ENCODE measurements at regions of chr18 and their contacts with region 1.

Region 1: GRCh38 chr18:11512096-11513030 is 97.0 kb upstream of the SLC35G4 start:
- DNase-seq: no peak
- ATAC-seq: no peak
- H3K4me3 ChIP-seq: no peak overlapping the region
- H3K4me3 Mint-ChIP-seq: no peak overlapping the region
- H3K27ac ChIP-seq: no peak overlapping the region
- H3K27ac Mint-ChIP-seq: no peak overlapping the region
- H3K4me1 ChIP-seq: no peaks in the 10 kb centered on the region
- H3K4me1 Mint-ChIP-seq: peaks cover 0 to 7% (median 4%) of the 10 kb centered on the region in 3 donors
- H3K27me3 ChIP-seq: no peaks in the 10 kb centered on the region
- H3K27me3 Mint-ChIP-seq: no peaks in the 10 kb centered on the region

Region 2: GRCh38 chr18:11541202-11541601 is 28.8 kb after region 1 on chr18:
- CTCF ChIA-PET with region 1: no interaction called
- POLR2A ChIA-PET with region 1: no interaction called
- DNase-seq: no peak
- ATAC-seq: no peak
- H3K4me3 ChIP-seq: no peak overlapping the region
- H3K4me3 Mint-ChIP-seq: no peak overlapping the region
- H3K27ac ChIP-seq: no peak overlapping the region
- H3K27ac Mint-ChIP-seq: no peak overlapping the region
- H3K4me1 ChIP-seq: no peaks in the 10 kb centered on the region
- H3K4me1 Mint-ChIP-seq: no peaks in the 10 kb centered on the region
- H3K27me3 ChIP-seq: peaks cover 0 to 3% of the 10 kb centered on the region in 2 experiments
- H3K27me3 Mint-ChIP-seq: peaks cover 3 to 5% of the 10 kb centered on the region in 2 donors

Region 3: DNA sequence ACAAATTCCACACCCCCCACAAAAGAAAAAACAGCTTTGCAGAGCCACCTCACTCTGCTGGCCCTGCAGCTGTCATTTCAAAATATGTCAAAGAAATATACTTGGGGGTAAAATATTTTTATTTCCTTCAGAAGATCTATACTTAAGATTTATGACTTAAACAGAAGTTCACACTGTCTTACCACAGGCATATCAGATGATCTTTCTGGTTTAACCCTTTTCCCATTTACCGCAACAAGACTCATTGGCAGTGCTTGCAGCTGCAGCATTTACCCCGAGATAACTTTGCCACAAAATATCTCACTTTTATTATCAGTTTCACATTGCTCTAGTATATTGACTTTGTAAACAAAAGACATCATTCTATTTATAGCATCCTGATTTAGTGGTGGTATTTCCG is 75.5 kb after region 1 on chr18:
- CTCF ChIA-PET with region 1: no interaction called
- POLR2A ChIA-PET with region 1: interaction called in 1 of 2 experiments, 11 read pairs
- DNase-seq: peak in 1 of 35 experiments; percentile 21
- ATAC-seq: peak in 3 of 4 experiments; percentile 27 to 56 (median 32)
- H3K4me3 ChIP-seq: no peak overlapping the region
- H3K4me3 Mint-ChIP-seq: no peak overlapping the region
- H3K27ac ChIP-seq: no peak overlapping the region
- H3K27ac Mint-ChIP-seq: peak overlapping the region in 1 of 2 donors; percentile 45
- H3K4me1 ChIP-seq: peaks cover 11 to 18% of the 10 kb centered on the region in 2 experiments
- H3K4me1 Mint-ChIP-seq: peaks cover 23 to 25% (median 25%) of the 10 kb centered on the region in 3 donors
- H3K27me3 ChIP-seq: peaks cover 0 to 3% of the 10 kb centered on the region in 2 experiments
- H3K27me3 Mint-ChIP-seq: peaks cover 3 to 4% of the 10 kb centered on the region in 2 donors

Region 4: DNA sequence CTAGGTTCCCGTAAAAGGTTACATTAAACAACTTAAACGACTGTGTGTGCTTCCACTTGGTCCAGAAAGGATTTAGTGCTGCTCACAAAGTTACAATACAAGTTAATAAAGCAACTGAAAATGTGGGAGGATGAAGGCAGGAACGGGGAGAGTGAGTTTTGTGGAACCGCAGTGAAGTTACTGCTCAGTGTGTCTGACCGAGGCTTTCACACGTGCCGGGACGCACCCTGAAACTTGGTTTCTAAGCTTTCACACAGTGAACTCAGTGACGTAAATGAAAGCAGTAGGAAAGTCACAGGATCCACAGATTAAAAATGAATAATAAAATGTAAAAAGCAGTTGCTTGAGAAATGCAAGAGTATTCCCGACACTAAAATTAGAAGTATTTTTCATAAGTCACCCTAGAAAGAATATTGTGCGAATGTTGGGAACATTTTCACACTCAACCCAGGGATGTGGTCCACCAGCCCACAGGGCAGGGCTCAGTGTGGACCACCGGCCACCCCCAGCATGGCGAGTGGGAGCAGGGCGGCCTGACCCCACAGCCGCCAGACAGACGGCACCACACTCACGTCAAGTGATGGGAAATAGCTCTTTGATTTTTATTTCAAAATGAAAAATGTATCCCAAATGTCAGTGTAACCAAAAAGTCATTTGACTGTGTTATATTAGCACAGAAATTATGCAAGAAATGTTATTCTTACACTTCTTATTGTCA is 306.3 kb after region 1 on chr18:
- CTCF ChIA-PET with region 1: no interaction called
- POLR2A ChIA-PET with region 1: no interaction called
- DNase-seq: peak in 9 of 35 experiments; percentile 2 to 44 (median 10)
- ATAC-seq: no peak
- H3K4me3 ChIP-seq: no peak overlapping the region
- H3K4me3 Mint-ChIP-seq: peak overlapping the region in 1 of 3 donors; percentile 34
- H3K27ac ChIP-seq: no peak overlapping the region
- H3K27ac Mint-ChIP-seq: no peak overlapping the region
- H3K4me1 ChIP-seq: no peaks in the 10 kb centered on the region
- H3K4me1 Mint-ChIP-seq: no peaks in the 10 kb centered on the region
- H3K27me3 ChIP-seq: no peaks in the 10 kb centered on the region
- H3K27me3 Mint-ChIP-seq: peaks cover 1 to 3% of the 10 kb centered on the region in 2 donors